ENCODE measurements at regions of chr17 and their contacts with region 1.

Region 1: DNA sequence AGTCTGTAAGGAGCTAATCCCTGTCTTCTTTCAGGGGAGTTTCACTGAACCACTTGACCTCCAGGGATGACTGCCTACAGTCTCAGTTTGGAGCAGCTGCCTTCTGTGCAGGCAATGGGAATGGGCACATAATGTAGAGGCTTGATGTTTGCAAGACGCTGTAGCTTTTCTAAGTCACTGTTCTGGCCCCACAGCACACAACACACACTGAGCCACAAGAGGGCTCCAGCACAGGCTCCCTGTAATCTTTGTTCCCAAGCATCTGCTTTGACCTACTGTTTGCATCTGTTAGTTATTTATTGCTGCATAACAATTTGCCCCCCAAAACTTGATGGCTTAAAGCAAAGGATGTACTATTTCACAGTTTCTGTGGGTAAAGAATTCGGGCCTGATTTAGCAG is 419.0 kb upstream of the ASIC2 start:
- ATAC-seq: peak in 1 of 8 experiments; percentile 16
- H3K4me3 ChIP-seq: no peak overlapping the region
- H3K27ac ChIP-seq: no peak overlapping the region
- H3K4me1 ChIP-seq: no peaks in the 10 kb centered on the region

Region 2: DNA sequence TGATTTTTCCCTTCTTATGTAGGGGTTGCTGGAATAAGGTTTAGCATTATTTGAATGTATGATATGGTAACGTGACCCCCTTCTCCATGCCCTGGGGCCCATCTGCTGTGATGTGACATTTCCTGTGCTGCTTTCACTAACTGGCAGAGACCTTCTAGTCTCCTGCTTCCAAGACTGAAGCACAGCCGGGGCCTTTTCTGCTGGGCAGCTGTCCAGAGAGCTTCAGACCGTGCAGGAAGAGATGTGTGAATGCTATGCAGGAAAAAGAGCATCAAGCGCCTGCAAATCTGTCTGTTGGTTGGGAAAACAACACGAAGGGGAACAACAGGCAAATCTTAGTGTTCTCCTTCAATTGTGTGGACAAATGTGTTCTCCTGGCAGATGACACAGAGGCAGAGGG is 592.0 kb before region 1 on chr17:
- in situ Hi-C with region 1: no loop called
- ATAC-seq: peak in 1 of 8 experiments; percentile 48
- H3K4me3 ChIP-seq: no peak overlapping the region
- H3K27ac ChIP-seq: no peak overlapping the region
- H3K4me1 ChIP-seq: no peaks in the 10 kb centered on the region

Region 3: GRCh38 chr17:33595828-33596227 is 116.3 kb before region 1 on chr17:
- in situ Hi-C with region 1: loop called in 1 of 9 experiments (anchors 25 kb)
- ATAC-seq: no peak
- H3K4me3 ChIP-seq: no peak overlapping the region
- H3K27ac ChIP-seq: no peak overlapping the region
- H3K4me1 ChIP-seq: peaks cover 0 to 7% of the 10 kb centered on the region in 2 donors